ENCODE measurements at regions of chr4 and their contacts with region 1.

Region 1: DNA sequence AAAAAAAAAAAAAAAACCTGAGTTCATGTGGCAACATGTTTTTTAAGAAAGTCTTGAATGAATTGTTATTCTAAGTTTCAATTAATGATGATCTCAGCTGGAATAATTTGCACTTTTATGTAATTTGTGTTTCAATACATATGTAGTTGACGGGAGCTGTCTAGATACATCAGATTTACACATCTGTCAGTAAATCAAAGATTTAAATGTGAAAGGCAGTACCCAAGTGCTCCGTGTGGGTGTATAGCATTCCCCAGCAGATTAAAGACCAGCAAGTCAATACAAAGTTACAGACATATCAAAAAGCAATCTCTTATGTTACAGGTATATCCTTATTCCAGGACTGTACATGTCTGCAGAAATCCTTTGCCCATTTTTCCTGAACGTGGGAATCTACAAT is 35.2 kb downstream of the SYNPO2 start:
- DNase-seq: no peak
- H3K4me3 ChIP-seq: no peak overlapping the region
- H3K27ac ChIP-seq: peak overlapping the region; percentile 84 to 90
- H3K4me1 ChIP-seq: peaks cover 0 to 98% (median 63%) of the 10 kb centered on the region in 4 donors
- H3K27me3 ChIP-seq: no peaks in the 10 kb centered on the region
- CTCF ChIP-seq: no peak

Region 2: DNA sequence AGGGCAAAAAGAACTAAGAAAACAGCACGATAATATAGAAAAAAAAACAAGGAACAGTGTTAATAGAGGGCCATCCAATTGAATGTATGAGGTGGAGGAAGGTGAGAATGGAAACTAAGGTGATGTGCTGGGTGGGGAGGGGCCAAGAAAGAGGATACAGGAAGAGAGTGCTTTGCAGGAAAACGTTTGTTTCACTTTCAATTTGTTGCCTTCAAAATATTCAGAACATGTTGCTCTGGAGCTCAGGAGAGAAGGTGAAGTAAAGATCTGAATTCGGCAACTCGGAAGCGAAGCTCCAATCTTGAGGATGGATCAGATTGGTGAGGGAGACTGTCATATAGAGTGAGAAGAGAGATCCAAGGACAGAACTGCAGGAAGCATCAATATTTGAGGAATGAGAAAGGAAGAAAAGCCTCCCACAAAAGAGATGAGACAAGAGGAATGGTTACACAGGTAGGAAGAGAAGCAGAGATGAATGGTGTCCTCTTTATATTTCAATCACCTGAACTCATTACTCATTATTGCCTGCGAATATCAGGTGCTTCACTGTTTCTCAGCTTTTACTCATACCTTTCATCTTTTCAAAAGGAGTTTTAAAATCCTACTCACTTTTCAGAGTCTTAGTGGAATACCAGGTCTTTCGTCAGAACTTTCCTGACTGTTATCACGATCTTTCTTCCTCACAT is 73.3 kb before region 1 on chr4:
- intact Hi-C with region 1: no loop called
- DNase-seq: no peak
- H3K4me3 ChIP-seq: peak overlapping the region; percentile 46 to 51
- H3K27ac ChIP-seq: peak overlapping the region; percentile 29 to 32
- H3K4me1 ChIP-seq: peaks cover 0 to 4% (median 0%) of the 10 kb centered on the region in 4 donors
- H3K27me3 ChIP-seq: no peaks in the 10 kb centered on the region
- CTCF ChIP-seq: no peak

Region 3: GRCh38 chr4:118904935-118905334 is 19.0 kb before region 1 on chr4:
- intact Hi-C with region 1: loop called (anchors 1 kb)
- DNase-seq: no peak
- H3K4me3 ChIP-seq: peak overlapping the region in 1 of 2 donors; percentile 7
- H3K27ac ChIP-seq: peak overlapping the region; percentile 77 to 90
- H3K4me1 ChIP-seq: peaks cover 0 to 94% (median 39%) of the 10 kb centered on the region in 4 donors
- H3K27me3 ChIP-seq: no peaks in the 10 kb centered on the region
- CTCF ChIP-seq: no peak

Measured in tibial artery (tissue), 4 donors.